Lower leg skin (tissue), 4 donors: ENCODE measurements at regions of chr20 and their contacts with region 1.

Region 1: GRCh38 chr20:14375416-14375985 is 38.1 kb upstream of the FLRT3 start:
- DNase-seq: no peak
- H3K4me3 ChIP-seq: no peak overlapping the region
- CTCF ChIP-seq: no peak
- POLR2A ChIP-seq: no peak

Region 2: DNA sequence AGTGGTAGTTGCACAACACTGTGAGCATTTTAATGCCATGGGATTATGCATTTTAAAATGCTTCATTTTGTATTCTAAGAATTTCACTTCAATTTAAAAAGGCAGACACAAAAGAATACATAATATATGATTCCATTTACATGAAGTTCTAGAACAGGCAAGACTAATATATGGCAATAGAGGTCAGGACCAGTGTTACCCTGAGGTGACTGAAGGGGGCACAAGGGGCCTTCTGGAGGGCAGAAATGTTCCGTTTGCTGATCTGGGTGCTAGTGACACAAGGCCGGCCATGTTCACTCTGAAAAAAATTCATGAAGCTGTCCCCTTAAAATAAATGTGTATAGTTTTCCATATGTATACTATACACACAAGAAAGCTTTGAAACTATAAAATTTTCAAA is 765.3 kb before region 1 on chr20:
- intact Hi-C with region 1: no loop called
- DNase-seq: no peak
- H3K4me3 ChIP-seq: no peak overlapping the region
- CTCF ChIP-seq: no peak
- POLR2A ChIP-seq: no peak

Region 3: GRCh38 chr20:14344746-14345145 is 30.8 kb before region 1 on chr20:
- intact Hi-C with region 1: loop called (anchors 2 kb)
- DNase-seq: no peak
- H3K4me3 ChIP-seq: no peak overlapping the region
- CTCF ChIP-seq: no peak
- POLR2A ChIP-seq: no peak

Region 4: GRCh38 chr20:14415492-14415891 is 40.0 kb after region 1 on chr20:
- intact Hi-C with region 1: no loop called
- DNase-seq: no peak
- H3K4me3 ChIP-seq: no peak overlapping the region
- CTCF ChIP-seq: no peak
- POLR2A ChIP-seq: no peak

Region 5: GRCh38 chr20:15487030-15487429 is 1111.5 kb after region 1 on chr20:
- intact Hi-C with region 1: loop called (anchors 5 kb)
- DNase-seq: no peak
- H3K4me3 ChIP-seq: no peak overlapping the region
- CTCF ChIP-seq: no peak
- POLR2A ChIP-seq: no peak